Heart left ventricle (tissue), 16 donors: ENCODE measurements at regions of chr19 and their contacts with region 1.

Region 1: GRCh38 chr19:32154418-32154817 is 191.0 kb upstream of the ZNF507 start:
- DNase-seq: no peak
- ATAC-seq: no peak
- H3K4me3 ChIP-seq: no peak overlapping the region
- H3K27ac ChIP-seq: no peak overlapping the region
- H3K4me1 ChIP-seq: no peaks in the 10 kb centered on the region
- H3K27me3 ChIP-seq: no peaks in the 10 kb centered on the region
- CTCF ChIP-seq: no peak
- POLR2A ChIP-seq: no peak

Region 2: GRCh38 chr19:32138416-32138815 is 16.0 kb before region 1 on chr19:
- intact Hi-C with region 1: loop called in 1 of 10 experiments (anchors 1 kb)
- DNase-seq: no peak
- ATAC-seq: no peak
- H3K4me3 ChIP-seq: no peak overlapping the region
- H3K27ac ChIP-seq: no peak overlapping the region
- H3K4me1 ChIP-seq: no peaks in the 10 kb centered on the region
- H3K27me3 ChIP-seq: no peaks in the 10 kb centered on the region
- CTCF ChIP-seq: peak in 1 of 12 donors; percentile 12
- POLR2A ChIP-seq: no peak